Aorta (tissue), 5 donors: ENCODE measurements at regions of chr12 and their contacts with region 1.

Region 1: GRCh38 chr12:89451841-89452251 is 72.8 kb downstream of the GALNT4 start:
- DNase-seq: peak in 1 of 2 donors; percentile 58
- ATAC-seq: peak; percentile 76
- H3K4me3 ChIP-seq: no peak overlapping the region
- H3K27ac ChIP-seq: peak overlapping the region in 1 of 2 donors; percentile 73
- H3K4me1 ChIP-seq: peaks cover 4 to 5% of the 10 kb centered on the region in 2 donors
- H3K27me3 ChIP-seq: no peaks in the 10 kb centered on the region

Region 2: DNA sequence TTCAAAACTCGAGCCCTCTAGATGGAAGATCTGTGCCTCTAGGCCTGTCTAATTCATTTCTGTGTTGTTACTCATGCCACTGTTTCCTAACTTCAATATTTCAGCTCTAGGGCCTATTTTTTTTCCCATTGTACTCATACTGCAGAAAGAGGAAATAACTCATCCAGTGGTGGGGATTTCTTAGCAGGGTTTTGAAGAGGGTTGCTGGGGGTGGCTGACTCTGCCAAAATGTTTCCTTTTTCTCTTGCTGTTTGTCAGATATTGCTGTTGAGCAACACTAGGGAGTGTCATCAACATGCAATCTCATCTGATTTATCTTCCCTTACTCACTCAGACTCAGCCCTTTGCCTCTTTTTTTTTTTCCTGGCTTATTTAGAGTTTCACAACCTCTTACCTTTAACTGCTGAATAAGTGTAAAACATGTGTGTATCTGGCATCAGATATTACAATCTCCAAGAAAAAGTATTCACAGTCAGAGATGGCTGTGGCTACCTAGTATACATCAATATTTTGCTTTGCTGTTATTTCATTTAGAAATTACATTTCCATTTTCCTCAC is 289.1 kb before region 1 on chr12:
- intact Hi-C with region 1: loop called in 1 of 2 experiments (anchors 5 kb)
- DNase-seq: peak; percentile 72 to 81
- ATAC-seq: peak; percentile 89
- H3K4me3 ChIP-seq: no peak overlapping the region
- H3K27ac ChIP-seq: no peak overlapping the region
- H3K4me1 ChIP-seq: peaks cover 0 to 2% of the 10 kb centered on the region in 2 donors
- H3K27me3 ChIP-seq: no peaks in the 10 kb centered on the region

Region 3: DNA sequence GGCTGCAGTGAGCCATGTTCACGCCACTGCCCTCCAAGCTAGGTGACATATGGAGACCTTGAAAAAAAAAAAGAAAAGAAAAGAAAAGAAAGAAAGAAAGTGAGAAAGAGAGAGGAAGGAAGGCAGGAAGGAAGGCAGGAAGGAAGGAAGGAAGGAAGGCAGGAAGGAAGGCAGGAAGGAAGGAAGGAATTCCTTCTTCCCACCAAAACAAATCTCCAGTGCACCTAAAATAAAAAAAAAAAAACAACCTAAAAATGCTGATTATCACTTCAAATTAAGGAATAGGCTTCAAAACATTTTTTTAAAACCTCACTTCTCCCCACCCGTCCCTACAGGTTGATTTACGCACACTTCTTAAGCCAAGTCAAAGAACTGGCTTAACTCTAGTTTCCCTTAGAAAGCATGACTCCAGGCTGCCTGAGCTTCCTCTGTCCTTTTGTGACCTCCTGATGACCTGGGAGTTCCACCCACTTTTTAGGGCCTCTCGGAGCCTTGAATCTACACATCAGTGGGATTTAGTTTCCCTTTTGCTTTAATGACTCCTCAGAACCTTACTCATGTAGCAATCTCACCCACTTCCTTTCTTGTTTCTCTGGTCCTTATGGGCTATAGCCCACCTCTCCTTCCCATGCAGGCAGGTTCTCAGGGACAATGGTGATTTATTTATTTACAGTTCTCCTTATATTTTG is 118.1 kb before region 1 on chr12:
- intact Hi-C with region 1: no loop called
- DNase-seq: peak in 1 of 2 donors; percentile 57
- ATAC-seq: no peak
- H3K4me3 ChIP-seq: no peak overlapping the region
- H3K27ac ChIP-seq: no peak overlapping the region
- H3K4me1 ChIP-seq: no peaks in the 10 kb centered on the region
- H3K27me3 ChIP-seq: no peaks in the 10 kb centered on the region

Region 4: DNA sequence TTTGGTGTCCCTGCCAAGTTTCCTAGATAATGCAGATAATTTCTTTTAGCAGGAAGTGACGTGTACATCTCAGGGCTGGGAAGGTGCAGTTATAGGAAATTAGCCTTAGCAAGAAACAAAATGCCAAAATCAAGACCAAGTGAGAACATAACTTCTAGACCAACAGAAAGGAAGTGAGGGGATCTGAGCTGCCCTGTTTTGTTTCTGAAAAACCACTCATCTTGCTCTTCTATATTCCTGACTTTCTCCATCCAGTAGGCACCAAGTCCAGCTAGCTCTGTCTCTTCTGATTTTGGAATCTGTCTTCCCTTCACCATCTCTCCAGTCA is 75.7 kb before region 1 on chr12:
- intact Hi-C with region 1: loop called in 1 of 2 experiments (anchors 2 kb)
- DNase-seq: no peak
- ATAC-seq: no peak
- H3K4me3 ChIP-seq: no peak overlapping the region
- H3K27ac ChIP-seq: peak overlapping the region in 1 of 2 donors; percentile 23
- H3K4me1 ChIP-seq: peaks cover 0 to 6% of the 10 kb centered on the region in 2 donors
- H3K27me3 ChIP-seq: no peaks in the 10 kb centered on the region

Region 5: GRCh38 chr12:89544681-89545184 is 92.9 kb after region 1 on chr12:
- intact Hi-C with region 1: no loop called
- DNase-seq: peak; percentile 58 to 75
- ATAC-seq: peak; percentile 4
- H3K4me3 ChIP-seq: no peak overlapping the region
- H3K27ac ChIP-seq: peak overlapping the region in 1 of 2 donors; percentile 29
- H3K4me1 ChIP-seq: peaks cover 0 to 2% of the 10 kb centered on the region in 2 donors
- H3K27me3 ChIP-seq: no peaks in the 10 kb centered on the region